ENCODE measurements at regions of chr1 and their contacts with region 1.

Region 1: DNA sequence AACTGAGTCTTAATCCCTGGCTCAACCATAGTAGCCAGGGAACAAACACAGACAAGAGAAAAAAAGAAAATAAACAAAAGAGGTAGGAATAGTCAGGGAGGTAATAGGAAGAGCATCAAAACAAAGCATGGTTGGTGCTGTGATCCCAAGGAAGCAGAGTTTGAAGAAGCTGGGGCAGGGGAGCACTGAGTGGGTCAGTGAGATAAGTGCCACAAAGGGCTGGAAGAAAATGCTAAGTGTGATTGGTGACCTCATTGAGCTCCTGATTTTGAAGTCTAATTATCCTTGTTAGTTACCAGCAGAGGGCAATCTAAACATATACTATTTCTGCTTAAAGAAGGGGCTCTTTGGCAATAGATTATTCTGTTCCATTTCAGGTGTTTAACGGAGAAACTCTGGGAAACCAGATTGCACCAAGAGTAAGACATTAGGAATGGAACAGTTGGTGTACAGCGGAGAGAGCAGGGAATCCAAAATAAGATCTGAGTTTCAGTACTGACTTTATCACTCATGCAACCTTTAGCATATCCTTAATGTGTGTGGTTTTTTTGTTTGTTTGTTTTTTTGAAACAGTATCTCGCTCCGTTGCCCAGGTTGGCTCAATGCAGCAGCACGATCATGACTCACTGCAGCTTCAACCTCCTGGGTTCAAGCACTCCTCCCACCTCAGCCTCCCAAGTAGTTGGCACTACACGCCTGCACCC is 30.7 kb upstream of the KIAA1614 start:
- DNase-seq: peak; percentile 53
- H3K4me3 ChIP-seq: no peak overlapping the region
- H3K27ac ChIP-seq: no peak overlapping the region
- H3K4me1 ChIP-seq: no peaks in the 10 kb centered on the region
- H3K27me3 ChIP-seq: no peaks in the 10 kb centered on the region
- CTCF ChIP-seq: peak; percentile 21 to 38
- POLR2A ChIP-seq: no peak

Region 2: DNA sequence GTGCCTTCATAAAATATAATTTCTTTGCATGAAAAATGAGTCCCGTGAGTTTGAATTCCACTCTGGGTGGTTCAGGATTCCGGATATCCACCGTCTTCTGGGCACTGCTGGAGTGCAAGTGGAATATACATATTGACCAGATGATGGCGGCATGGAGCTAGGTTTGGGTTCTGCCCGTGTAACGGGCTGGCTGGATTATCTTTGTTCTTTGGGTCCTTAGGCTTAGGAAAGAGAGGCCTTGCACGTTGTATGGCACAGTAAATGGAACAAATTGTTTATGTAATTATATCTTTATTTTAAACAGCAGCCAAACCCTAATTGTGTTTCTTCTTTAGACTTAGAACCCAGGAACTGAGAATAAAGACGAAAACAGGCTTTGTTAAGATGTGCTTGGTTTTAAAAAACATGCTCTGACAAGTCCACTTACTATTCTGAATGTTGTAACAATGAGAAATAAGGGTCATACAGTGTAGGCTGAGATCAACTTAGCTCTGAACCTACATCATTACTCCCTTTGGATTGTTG is 366.0 kb before region 1 on chr1:
- CTCF ChIA-PET with region 1: interaction called, 46 read pairs
- POLR2A ChIA-PET with region 1: no interaction called
- dilution Hi-C with region 1: no loop called
- intact Hi-C with region 1: loop called (anchors 5 kb)
- DNase-seq: peak; percentile 91
- H3K4me3 ChIP-seq: no peak overlapping the region
- H3K27ac ChIP-seq: peak overlapping the region; percentile 52
- H3K4me1 ChIP-seq: peaks cover 29% of the 10 kb centered on the region
- H3K27me3 ChIP-seq: no peaks in the 10 kb centered on the region
- CTCF ChIP-seq: peak; percentile 68 to 73
- POLR2A ChIP-seq: no peak

Region 3: GRCh38 chr1:180898441-180899219 is 16.7 kb after region 1 on chr1:
- CTCF ChIA-PET with region 1: interaction called, 13 read pairs
- POLR2A ChIA-PET with region 1: no interaction called
- dilution Hi-C with region 1: no loop called
- intact Hi-C with region 1: no loop called
- DNase-seq: no peak
- H3K4me3 ChIP-seq: no peak overlapping the region
- H3K27ac ChIP-seq: no peak overlapping the region
- H3K4me1 ChIP-seq: no peaks in the 10 kb centered on the region
- H3K27me3 ChIP-seq: no peaks in the 10 kb centered on the region
- CTCF ChIP-seq: no peak
- POLR2A ChIP-seq: no peak

Region 4: GRCh38 chr1:180926164-180926981 is 44.4 kb after region 1 on chr1:
- CTCF ChIA-PET with region 1: interaction called, 26 read pairs
- POLR2A ChIA-PET with region 1: no interaction called
- dilution Hi-C with region 1: no loop called
- intact Hi-C with region 1: no loop called
- DNase-seq: no peak
- H3K4me3 ChIP-seq: no peak overlapping the region
- H3K27ac ChIP-seq: no peak overlapping the region
- H3K4me1 ChIP-seq: no peaks in the 10 kb centered on the region
- H3K27me3 ChIP-seq: no peaks in the 10 kb centered on the region
- CTCF ChIP-seq: no peak
- POLR2A ChIP-seq: no peak

Region 5: DNA sequence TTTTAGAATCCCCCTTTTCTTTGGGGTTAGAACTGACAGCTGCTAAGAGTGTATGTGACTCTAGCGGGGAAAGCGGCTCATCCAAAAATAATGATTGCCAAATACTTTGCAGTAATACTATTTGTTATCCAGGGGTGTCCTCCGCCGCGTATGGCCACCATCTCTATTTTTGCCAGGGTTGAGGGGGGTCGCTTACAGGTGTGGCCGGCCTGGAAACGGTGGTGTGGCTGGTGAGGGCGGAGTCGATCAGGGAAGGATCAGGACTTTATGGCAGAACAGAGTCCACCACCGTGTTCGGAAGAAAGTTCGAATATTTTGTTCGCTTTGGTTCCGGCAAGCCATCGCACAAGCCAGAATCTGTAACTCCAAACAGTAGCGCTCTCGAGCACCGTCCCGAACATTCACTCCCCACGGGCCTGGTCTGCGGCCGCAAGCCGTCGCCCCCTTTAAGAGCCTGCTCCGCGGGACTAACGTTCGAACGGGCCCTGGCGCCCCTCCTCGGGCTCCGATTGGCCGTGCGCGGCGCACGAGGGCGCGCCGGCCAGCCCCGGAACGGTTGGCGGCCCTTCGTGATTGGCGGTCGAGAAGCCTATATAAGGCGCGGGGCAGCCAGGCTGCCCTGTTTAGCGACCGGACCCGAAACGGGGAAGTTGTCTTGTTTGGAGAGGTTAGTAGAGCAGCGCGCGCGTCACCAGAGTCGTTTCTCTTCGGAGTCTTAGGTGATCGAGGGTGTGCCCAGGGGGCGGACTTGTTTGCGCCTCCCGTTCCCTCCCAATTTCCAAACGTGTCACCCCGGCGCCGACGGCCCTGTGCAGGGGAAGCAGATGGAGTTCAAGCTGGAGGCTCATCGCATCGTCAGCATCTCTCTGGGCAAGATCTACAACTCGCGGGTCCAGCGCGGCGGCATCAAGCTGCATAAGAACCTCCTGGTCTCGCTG is 206.4 kb after region 1 on chr1 and contains the start of gene IER5:
- CTCF ChIA-PET with region 1: interaction called, 17 read pairs
- POLR2A ChIA-PET with region 1: interaction called, 3 read pairs
- dilution Hi-C with region 1: no loop called
- intact Hi-C with region 1: loop called (anchors 1 kb)
- DNase-seq: peak; percentile 97
- H3K4me3 ChIP-seq: peak within 1 kb of the TSS; percentile 47 to 97 (median 54)
- H3K27ac ChIP-seq: peak within 1 kb of the TSS; percentile 47
- H3K4me1 ChIP-seq: peaks cover 17% of the 10 kb centered on the region
- H3K27me3 ChIP-seq: no peaks in the 10 kb centered on the region
- CTCF ChIP-seq: no peak
- POLR2A ChIP-seq: peak; percentile 100
- total RNA-seq, gene IER5: 14.4 and 14.9 TPM in 2 replicates

Region 6: DNA sequence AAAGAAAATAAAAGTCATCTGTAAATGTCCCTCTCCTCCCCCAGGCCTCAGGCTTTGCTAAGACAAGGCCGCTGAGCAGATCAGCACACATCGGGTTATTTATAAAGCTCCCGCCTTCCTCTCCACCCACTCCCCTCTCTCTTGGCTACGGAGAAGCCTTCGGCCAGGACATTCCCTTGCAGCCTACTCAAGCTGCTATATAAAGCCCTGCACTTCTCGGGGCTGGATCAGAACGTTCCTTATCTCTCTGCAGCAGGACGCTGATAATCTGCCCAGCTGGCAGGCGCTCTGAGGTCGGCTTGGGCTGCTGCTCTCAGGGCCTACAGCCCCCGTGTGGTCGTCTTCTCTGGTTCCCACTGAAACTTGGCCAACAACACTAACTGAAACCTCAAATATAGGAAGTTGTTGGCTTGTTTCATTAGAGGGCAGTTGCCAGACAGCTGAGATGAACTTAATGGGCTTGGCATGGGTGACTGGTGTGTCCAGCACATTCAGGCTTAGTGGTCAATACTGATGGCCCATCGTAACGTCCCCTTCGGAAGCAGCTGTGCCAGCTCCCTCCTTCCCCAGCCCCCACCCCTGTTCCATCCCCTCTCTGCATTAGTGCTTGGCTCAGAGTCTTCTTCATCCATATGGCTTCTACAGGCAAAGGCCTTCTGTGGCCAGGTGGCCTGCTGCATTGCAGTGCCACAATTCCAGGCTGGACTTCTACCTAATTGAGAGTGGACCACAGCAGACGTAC is 271.1 kb after region 1 on chr1:
- CTCF ChIA-PET with region 1: interaction called, 25 read pairs
- POLR2A ChIA-PET with region 1: no interaction called
- dilution Hi-C with region 1: no loop called
- intact Hi-C with region 1: no loop called
- DNase-seq: peak; percentile 98
- H3K4me3 ChIP-seq: no peak overlapping the region
- H3K27ac ChIP-seq: no peak overlapping the region
- H3K4me1 ChIP-seq: peaks cover 7% of the 10 kb centered on the region
- H3K27me3 ChIP-seq: no peaks in the 10 kb centered on the region
- CTCF ChIP-seq: peak; percentile 31 to 72
- POLR2A ChIP-seq: no peak

Region 7: DNA sequence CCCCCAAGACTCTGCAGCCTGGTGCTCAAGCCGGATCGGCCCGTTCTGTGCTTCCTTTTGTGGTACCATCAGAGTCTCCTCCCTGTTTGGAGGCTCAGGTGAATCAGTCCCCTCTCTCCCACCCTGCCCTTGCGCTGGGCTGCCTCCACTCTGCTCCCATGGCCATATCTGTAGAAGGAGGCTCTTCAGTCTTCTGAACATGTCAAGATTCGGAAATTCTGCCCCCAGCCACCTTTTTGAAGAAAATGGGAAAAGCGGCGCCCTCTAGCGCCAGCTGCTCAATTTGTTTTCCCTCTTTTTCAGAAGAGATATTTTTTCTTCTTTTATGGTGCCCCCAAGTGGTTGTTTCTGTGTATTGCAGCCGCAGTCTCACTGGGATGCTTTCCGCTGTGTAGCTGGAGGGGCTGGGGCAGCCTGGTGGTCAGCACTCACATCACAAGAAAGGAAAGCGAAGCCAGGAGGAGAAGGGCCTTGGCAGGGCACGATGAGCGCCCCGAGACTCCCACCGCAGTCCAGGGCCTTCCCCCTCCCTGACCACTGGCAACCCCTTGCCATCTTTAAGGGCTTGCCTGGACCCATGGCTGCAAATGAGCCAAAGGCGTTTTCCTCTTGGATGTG is 542.9 kb after region 1 on chr1:
- CTCF ChIA-PET with region 1: interaction called, 14 read pairs
- POLR2A ChIA-PET with region 1: no interaction called
- dilution Hi-C with region 1: no loop called
- intact Hi-C with region 1: no loop called
- DNase-seq: peak; percentile 71
- H3K4me3 ChIP-seq: no peak overlapping the region
- H3K27ac ChIP-seq: no peak overlapping the region
- H3K4me1 ChIP-seq: no peaks in the 10 kb centered on the region
- H3K27me3 ChIP-seq: no peaks in the 10 kb centered on the region
- CTCF ChIP-seq: peak; percentile 95 to 99
- POLR2A ChIP-seq: no peak

Measured in endothelial cell of umbilical vein (primary cell).